Activated CD4-positive, alpha-beta T cell treated with anti-CD3 and anti-CD28 coated beads for 36 hours (primary cell): ENCODE measurements at regions of chr3 and their contacts with region 1.

Region 1: GRCh38 chr3:88997260-88997659 is 110.2 kb upstream of the EPHA3 start:
- DNase-seq: no peak
- ATAC-seq: no peak
- H3K4me3 Mint-ChIP-seq: no peak overlapping the region
- H3K27ac Mint-ChIP-seq: no peak overlapping the region
- H3K4me1 Mint-ChIP-seq: no peaks in the 10 kb centered on the region
- H3K27me3 Mint-ChIP-seq: no peaks in the 10 kb centered on the region

Region 2: DNA sequence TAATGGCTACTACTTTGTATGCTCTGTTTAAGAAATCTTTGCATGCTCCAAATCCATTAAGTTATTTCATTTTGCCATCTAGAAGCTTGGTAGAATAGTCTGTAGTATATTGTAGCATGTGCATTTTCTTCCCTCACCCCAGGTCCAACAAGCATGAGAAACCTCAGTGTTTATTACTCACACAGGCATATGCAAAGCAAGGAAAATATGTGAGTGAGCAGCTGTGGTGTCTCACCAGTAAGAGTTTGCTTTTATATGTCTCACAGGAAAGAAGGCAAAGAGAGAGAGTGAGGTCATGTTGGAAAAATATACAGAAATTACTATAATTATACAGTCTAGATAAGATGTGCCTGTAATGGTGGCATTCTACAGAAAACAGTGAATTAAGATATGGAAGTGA is 535.0 kb before region 1 on chr3:
- CTCF ChIA-PET with region 1: no interaction called
- POLR2A ChIA-PET with region 1: no interaction called
- intact Hi-C with region 1: loop called in 1 of 2 experiments (anchors 5 kb)
- DNase-seq: no peak
- ATAC-seq: no peak
- H3K4me3 Mint-ChIP-seq: no peak overlapping the region
- H3K27ac Mint-ChIP-seq: no peak overlapping the region
- H3K4me1 Mint-ChIP-seq: no peaks in the 10 kb centered on the region
- H3K27me3 Mint-ChIP-seq: no peaks in the 10 kb centered on the region

Region 3: DNA sequence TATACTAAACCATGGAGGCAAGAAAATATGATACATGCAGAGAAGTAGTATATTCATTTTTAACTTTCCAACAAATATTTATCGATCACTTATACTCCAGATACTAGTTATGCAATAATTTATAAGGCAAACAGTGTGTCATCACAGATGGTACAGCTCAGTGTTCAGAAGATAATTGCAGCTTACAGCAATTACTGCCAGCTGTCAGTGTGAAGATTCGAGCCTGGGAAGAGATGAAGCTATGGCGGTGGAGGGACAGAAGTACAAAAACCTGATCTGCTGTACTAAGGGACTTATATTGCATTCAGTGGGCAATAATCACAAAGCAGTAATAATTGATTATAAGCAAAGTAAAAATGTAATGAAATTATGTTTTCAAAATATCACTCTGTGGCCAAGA is 60.4 kb before region 1 on chr3:
- CTCF ChIA-PET with region 1: no interaction called
- POLR2A ChIA-PET with region 1: no interaction called
- intact Hi-C with region 1: no loop called
- DNase-seq: no peak
- ATAC-seq: no peak
- H3K4me3 Mint-ChIP-seq: no peak overlapping the region
- H3K27ac Mint-ChIP-seq: no peak overlapping the region
- H3K4me1 Mint-ChIP-seq: no peaks in the 10 kb centered on the region
- H3K27me3 Mint-ChIP-seq: no peaks in the 10 kb centered on the region

Region 4: GRCh38 chr3:89586256-89586655 is 589.0 kb after region 1 on chr3:
- CTCF ChIA-PET with region 1: no interaction called
- POLR2A ChIA-PET with region 1: no interaction called
- intact Hi-C with region 1: no loop called
- DNase-seq: no peak
- ATAC-seq: no peak
- H3K4me3 Mint-ChIP-seq: no peak overlapping the region
- H3K27ac Mint-ChIP-seq: no peak overlapping the region
- H3K4me1 Mint-ChIP-seq: no peaks in the 10 kb centered on the region
- H3K27me3 Mint-ChIP-seq: no peaks in the 10 kb centered on the region